ENCODE measurements at regions of chr4 and their contacts with region 1.

Region 1: DNA sequence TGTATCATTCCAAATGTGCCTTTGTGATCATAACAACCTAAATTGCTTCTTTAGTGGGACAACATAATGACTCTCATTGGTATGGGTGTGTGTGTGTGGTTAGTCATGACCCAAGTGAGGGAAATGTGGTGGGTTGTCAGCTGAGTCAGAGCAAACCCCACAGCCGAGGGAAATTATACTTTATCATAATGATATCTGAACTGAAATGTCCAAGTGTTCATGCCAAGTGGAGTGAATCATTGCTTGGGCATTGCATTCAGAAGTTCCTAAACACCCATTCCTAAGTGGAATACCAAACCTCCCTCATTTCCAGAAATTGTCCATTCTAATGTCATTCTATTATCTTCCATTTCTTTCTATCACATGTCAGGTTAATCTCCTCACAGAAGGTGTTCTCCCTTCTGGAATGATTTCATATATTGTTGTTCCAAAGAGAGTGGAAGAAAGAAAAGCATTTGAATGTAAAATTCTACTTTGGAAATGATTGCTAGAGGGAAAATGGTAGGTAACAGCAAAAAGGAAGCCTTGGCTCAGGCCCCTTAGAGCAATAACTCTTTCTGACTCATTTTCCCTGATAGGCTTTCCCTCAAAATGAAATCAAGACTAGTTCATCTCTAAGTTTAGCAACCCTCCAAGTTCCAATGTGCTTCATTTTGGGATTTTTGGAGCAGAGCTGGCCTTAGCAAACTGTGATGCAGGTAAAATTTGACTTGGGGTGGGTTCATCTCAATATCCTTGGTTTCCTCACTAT is 230.7 kb upstream of the KCNIP4 start:
- DNase-seq: no peak
- ATAC-seq: no peak

Region 2: DNA sequence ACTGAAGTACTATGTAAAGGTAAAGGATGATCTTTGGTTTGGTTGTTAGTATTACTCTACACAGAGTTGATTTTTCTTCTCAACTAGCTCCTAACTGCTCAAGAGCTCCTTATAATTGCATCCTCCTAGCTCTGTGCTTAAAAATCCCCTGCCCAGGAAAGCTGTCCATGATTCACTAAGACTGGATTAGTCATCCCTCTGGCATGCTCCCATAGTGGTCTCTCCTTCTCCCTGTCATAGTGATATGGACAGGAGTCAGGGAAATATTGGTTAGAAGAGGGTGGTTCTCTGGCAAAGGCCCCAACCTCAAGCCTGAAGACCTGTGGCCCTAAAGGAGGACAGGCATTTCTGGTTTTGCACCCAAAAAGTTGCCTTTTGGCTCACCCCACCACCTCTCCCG is 11.6 kb after region 1 on chr4:
- intact Hi-C with region 1: loop called (anchors 1 kb)
- DNase-seq: no peak
- ATAC-seq: no peak

Region 3: DNA sequence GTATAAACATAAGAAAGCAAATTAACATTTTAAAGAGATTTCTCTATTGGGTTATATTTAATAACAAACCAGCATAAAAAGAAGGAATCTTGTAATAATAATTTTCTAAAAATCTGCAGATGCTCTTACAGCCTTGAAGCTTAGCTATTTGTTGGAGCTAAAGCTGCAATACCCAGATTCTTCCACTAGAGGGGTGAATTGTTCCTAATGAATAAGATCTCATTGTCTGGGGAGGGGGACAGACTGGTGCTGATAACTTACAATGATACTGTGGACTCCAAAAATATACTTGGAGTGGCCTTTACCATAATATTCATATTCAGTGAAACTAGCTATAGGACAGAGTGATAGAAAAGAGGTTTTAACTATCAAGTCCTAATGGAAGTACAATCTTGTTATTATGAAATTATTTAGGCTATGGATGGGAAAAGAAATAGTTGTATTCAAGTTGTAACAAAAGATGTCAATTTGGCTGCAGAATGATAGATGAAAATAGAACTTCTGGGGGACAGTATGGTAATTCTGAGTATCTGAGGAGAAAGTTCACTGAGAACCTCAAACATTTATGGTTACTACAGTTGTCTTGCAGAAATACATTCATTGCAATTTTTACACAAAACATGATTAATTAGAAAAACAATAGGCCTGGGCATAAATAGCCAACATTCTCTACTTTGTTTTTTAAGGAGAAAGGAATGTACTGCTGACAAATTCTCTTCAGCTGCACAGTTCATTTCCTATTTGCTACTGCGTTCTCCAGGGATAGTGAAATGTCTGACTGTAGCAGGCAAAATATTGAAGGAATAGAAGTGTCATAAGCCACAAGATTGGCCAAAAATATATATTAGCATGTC is 956.7 kb after region 1 on chr4:
- intact Hi-C with region 1: no loop called
- DNase-seq: no peak
- ATAC-seq: no peak